Activated T-helper 1 cell treated with anti-CD3 and anti-CD28 coated beads, Interleukin-12 subunit alpha, Interleukin-12 subunit beta, Interleukin-2, Interleukin-4 antibody, amounts not matched to agents 30 ng/mL and 10 ng/mL and 1 ng/mL, durations not matched to agents 14 hours and 24 hours and 36 hours (primary cell): ENCODE measurements at regions of chr1 and their contacts with region 1.

Region 1: DNA sequence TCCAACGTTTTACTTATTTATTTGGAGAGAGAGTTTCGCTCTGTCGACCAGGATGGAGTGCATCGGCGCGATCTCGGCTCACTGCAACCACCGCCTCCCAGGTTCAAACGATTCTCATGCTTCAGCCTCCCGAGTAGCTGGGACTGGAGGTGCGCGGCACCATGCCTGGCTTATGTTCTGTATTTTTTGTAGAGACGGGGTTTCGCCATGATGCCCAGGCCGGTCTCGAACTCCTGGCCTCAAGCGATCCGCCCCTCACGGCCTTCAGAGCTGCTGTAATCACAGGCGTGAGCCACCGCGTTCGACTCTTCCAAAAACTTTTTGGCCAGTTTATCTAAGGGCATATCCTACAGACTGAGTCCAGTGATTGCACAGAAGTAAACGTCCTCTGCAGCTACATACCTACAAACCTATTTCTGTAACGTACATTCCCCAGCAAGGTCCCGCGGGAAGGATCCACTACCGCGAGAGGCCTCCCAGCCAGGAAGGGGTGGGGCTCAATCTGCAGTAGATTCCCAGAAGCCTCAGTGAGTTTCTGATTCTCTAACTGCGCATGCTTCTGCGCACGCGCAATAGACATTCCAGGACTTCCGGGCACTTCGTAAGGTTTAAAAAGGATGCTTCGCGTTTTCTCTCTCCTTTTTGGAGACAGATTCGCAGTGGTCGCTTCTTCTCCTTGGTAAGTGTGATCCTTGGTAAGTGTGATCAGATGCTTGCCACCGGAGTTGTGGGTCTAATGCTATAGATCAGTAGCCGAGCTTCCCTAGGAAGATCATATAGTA is at the start of gene RCC1:
- DNase-seq: peak; percentile 96
- H3K4me3 Mint-ChIP-seq: peak within 1 kb of the TSS; percentile 100
- H3K27ac Mint-ChIP-seq: peak within 1 kb of the TSS; percentile 97
- H3K4me1 Mint-ChIP-seq: peaks cover 32% of the 10 kb centered on the region
- H3K27me3 Mint-ChIP-seq: peaks cover 7% of the 10 kb centered on the region
- total RNA-seq, gene RCC1: 130 and 135 TPM in 2 replicates

Region 2: GRCh38 chr1:28259307-28260167 is 246.1 kb before region 1 on chr1 and contains the start of gene SESN2:
- intact Hi-C with region 1: loop called (anchors 1 kb)
- DNase-seq: peak; percentile 99
- H3K4me3 Mint-ChIP-seq: peak within 1 kb of the TSS; percentile 82
- H3K27ac Mint-ChIP-seq: peak within 1 kb of the TSS; percentile 90
- H3K4me1 Mint-ChIP-seq: peaks cover 51% of the 10 kb centered on the region
- H3K27me3 Mint-ChIP-seq: no peaks in the 10 kb centered on the region
- total RNA-seq, gene SESN2: 18.7 and 19.3 TPM in 2 replicates

Region 3: GRCh38 chr1:28359592-28360239 is 145.9 kb before region 1 on chr1:
- intact Hi-C with region 1: loop called (anchors 1 kb)
- DNase-seq: peak; percentile 50
- H3K4me3 Mint-ChIP-seq: no peak overlapping the region
- H3K27ac Mint-ChIP-seq: no peak overlapping the region
- H3K4me1 Mint-ChIP-seq: no peaks in the 10 kb centered on the region
- H3K27me3 Mint-ChIP-seq: peaks cover 3% of the 10 kb centered on the region

Region 4: DNA sequence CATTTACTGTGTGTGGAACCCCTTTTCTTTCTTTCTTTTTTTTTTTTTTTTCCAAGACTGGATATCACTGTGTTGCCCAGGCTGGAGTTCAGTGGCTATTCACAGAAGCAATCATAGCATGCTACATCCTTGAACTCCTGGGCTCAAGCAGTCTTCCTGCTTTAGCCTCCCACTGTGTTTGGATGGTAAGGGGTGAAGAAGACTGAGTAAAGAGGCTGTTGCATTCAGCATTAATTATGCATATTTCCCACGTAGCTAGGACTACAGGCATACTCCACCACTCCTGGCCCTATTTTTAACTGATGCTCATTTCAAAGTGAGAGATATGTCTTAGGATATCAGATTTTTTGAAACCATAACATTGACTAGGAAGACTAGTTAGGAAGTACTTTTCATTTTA is 96.5 kb before region 1 on chr1:
- intact Hi-C with region 1: loop called (anchors 1 kb)
- DNase-seq: no peak
- H3K4me3 Mint-ChIP-seq: no peak overlapping the region
- H3K27ac Mint-ChIP-seq: no peak overlapping the region
- H3K4me1 Mint-ChIP-seq: no peaks in the 10 kb centered on the region
- H3K27me3 Mint-ChIP-seq: no peaks in the 10 kb centered on the region

Region 5: GRCh38 chr1:28518000-28518744 is 12.6 kb after region 1 on chr1:
- intact Hi-C with region 1: loop called (anchors 1 kb)
- DNase-seq: peak; percentile 86
- H3K4me3 Mint-ChIP-seq: peak overlapping the region; percentile 92
- H3K27ac Mint-ChIP-seq: peak overlapping the region; percentile 92
- H3K4me1 Mint-ChIP-seq: peaks cover 33% of the 10 kb centered on the region
- H3K27me3 Mint-ChIP-seq: no peaks in the 10 kb centered on the region